WTC11 (cell line): ENCODE measurements at regions of chr5 and their contacts with region 1.

Region 1: GRCh38 chr5:135560858-135561257 is 17.9 kb downstream of the CXCL14 start:
- DNase-seq: peak; percentile 89
- ATAC-seq: peak; percentile 92
- H3K4me3 Mint-ChIP-seq: no peak overlapping the region
- H3K27ac Mint-ChIP-seq: no peak overlapping the region
- H3K4me1 Mint-ChIP-seq: peaks cover 25% of the 10 kb centered on the region
- H3K27me3 Mint-ChIP-seq: peaks cover 39% of the 10 kb centered on the region
- CTCF ChIP-seq: peak; percentile 77

Region 2: DNA sequence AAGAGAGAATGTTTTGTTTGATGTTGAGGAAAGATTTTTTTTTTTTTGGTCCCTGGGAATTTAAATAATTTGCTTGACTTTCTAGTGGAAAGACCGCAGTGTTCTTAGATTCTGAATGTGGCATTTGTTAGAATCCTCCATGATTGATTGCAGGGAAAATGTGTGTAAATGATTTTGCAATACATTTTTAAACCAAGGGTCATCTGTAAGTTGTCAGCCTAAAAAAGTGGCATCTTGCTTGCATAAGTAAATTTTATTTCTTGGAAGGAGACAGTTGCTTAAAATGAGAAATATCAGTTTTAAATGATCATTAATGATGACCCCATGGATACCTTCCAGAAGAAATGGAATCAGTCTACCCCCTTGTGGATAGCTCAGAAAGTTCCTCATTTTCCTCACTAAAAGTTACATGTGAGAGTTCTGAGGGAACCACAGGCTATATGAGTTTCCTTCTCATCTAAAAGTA is 168.5 kb after region 1 on chr5:
- CTCF ChIA-PET with region 1: interaction called, 80 read pairs
- POLR2A ChIA-PET with region 1: interaction called, 3 read pairs
- DNase-seq: no peak
- ATAC-seq: 0 out of 2 replicates have a peak, but pooled peaks have one; percentile 41
- H3K4me3 Mint-ChIP-seq: no peak overlapping the region
- H3K27ac Mint-ChIP-seq: no peak overlapping the region
- H3K4me1 Mint-ChIP-seq: peaks cover 11% of the 10 kb centered on the region
- H3K27me3 Mint-ChIP-seq: no peaks in the 10 kb centered on the region
- CTCF ChIP-seq: no peak

Region 3: GRCh38 chr5:135750506-135750905 is 189.6 kb after region 1 on chr5:
- CTCF ChIA-PET with region 1: interaction called, 16 read pairs
- POLR2A ChIA-PET with region 1: no interaction called
- DNase-seq: peak; percentile 36
- ATAC-seq: peak; percentile 82
- H3K4me3 Mint-ChIP-seq: no peak overlapping the region
- H3K27ac Mint-ChIP-seq: no peak overlapping the region
- H3K4me1 Mint-ChIP-seq: peaks cover 4% of the 10 kb centered on the region
- H3K27me3 Mint-ChIP-seq: peaks cover 2% of the 10 kb centered on the region
- CTCF ChIP-seq: no peak

Region 4: DNA sequence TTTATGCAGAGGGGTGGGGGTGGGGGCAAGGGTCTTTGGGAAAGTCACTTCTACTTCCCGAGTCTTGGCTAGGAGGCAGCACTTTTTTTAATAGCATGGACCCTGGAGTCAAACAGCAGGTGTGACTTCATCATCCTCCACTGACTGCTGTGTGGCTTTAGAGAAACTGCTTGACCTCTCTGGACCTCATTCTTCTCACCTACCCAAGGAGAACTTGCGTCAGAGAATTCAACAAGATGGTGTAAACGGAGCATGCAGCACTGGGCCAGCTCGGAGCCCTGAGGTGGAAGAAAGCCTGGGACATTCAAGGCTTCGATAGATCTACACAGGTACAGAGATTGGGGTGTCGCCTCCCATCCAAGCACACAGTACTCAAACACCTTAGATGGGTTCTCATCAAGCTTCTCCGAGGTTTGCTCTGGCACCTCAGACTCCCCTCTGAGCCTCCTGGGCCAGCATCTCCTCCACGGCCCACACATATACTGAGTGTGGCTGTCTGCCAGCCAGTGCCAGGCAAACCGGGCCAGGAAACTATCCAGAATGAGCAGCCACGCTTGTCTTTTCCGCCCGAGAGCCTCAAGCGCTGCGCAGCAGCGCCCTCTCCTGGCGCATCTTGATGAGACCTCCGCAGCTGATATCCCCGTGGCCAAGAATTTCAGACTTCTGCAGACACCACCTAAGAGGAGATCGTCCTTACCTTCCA is 269.0 kb after region 1 on chr5:
- CTCF ChIA-PET with region 1: interaction called, 81 read pairs
- POLR2A ChIA-PET with region 1: interaction called, 4 read pairs
- DNase-seq: peak; percentile 80
- ATAC-seq: peak; percentile 18
- H3K4me3 Mint-ChIP-seq: no peak overlapping the region
- H3K27ac Mint-ChIP-seq: no peak overlapping the region
- H3K4me1 Mint-ChIP-seq: 0 out of 2 replicates have a peak, but pooled peaks cover 2% of the 10 kb centered on the region
- H3K27me3 Mint-ChIP-seq: peaks cover 49% of the 10 kb centered on the region
- CTCF ChIP-seq: peak; percentile 92